ENCODE measurements at regions of chr19 and their contacts with region 1.

Region 1: GRCh38 chr19:1020868-1021425 is at the start of gene TMEM259:
- DNase-seq: peak; percentile 98 to 99 (median 98)
- H3K4me3 ChIP-seq: peak within 1 kb of the TSS; percentile 66 to 69
- H3K4me3 Mint-ChIP-seq: peak within 1 kb of the TSS; percentile 86 to 92 (median 89)
- H3K27ac ChIP-seq: peak within 1 kb of the TSS; percentile 95
- H3K27ac Mint-ChIP-seq: peak within 1 kb of the TSS; percentile 97 to 100 (median 100)
- H3K4me1 ChIP-seq: peaks cover 54% of the 10 kb centered on the region
- H3K4me1 Mint-ChIP-seq: peaks cover 19 to 62% (median 39%) of the 10 kb centered on the region in 4 donors
- H3K27me3 ChIP-seq: no peaks in the 10 kb centered on the region
- H3K27me3 Mint-ChIP-seq: peaks cover 0 to 6% of the 10 kb centered on the region in 2 donors
- total RNA-seq, gene TMEM259: 315 to 329 TPM

Region 2: GRCh38 chr19:970695-971094 is 50.3 kb before region 1 on chr19:
- CTCF ChIA-PET with region 1: no interaction called
- POLR2A ChIA-PET with region 1: no interaction called
- intact Hi-C with region 1: no loop called
- DNase-seq: no peak
- H3K4me3 ChIP-seq: no peak overlapping the region
- H3K4me3 Mint-ChIP-seq: no peak overlapping the region
- H3K27ac ChIP-seq: no peak overlapping the region
- H3K27ac Mint-ChIP-seq: peak overlapping the region in 1 of 7 donors; percentile 70
- H3K4me1 ChIP-seq: no peaks in the 10 kb centered on the region
- H3K4me1 Mint-ChIP-seq: no peaks in the 10 kb centered on the region
- H3K27me3 ChIP-seq: no peaks in the 10 kb centered on the region
- H3K27me3 Mint-ChIP-seq: no peaks in the 10 kb centered on the region

Region 3: GRCh38 chr19:1001538-1002166 is 19.3 kb before region 1 on chr19:
- CTCF ChIA-PET with region 1: interaction called, 4 read pairs
- POLR2A ChIA-PET with region 1: interaction called, 8 read pairs
- intact Hi-C with region 1: loop called (anchors 2 kb)
- DNase-seq: peak; percentile 60 to 71 (median 61)
- H3K4me3 ChIP-seq: no peak overlapping the region
- H3K4me3 Mint-ChIP-seq: no peak overlapping the region
- H3K27ac ChIP-seq: no peak overlapping the region
- H3K27ac Mint-ChIP-seq: peak overlapping the region in 1 of 7 donors; percentile 21
- H3K4me1 ChIP-seq: peaks cover 15% of the 10 kb centered on the region
- H3K4me1 Mint-ChIP-seq: peaks cover 2 to 18% (median 10%) of the 10 kb centered on the region in 4 donors
- H3K27me3 ChIP-seq: peaks cover 26% of the 10 kb centered on the region
- H3K27me3 Mint-ChIP-seq: peaks cover 17 to 19% of the 10 kb centered on the region in 2 donors

Region 4: DNA sequence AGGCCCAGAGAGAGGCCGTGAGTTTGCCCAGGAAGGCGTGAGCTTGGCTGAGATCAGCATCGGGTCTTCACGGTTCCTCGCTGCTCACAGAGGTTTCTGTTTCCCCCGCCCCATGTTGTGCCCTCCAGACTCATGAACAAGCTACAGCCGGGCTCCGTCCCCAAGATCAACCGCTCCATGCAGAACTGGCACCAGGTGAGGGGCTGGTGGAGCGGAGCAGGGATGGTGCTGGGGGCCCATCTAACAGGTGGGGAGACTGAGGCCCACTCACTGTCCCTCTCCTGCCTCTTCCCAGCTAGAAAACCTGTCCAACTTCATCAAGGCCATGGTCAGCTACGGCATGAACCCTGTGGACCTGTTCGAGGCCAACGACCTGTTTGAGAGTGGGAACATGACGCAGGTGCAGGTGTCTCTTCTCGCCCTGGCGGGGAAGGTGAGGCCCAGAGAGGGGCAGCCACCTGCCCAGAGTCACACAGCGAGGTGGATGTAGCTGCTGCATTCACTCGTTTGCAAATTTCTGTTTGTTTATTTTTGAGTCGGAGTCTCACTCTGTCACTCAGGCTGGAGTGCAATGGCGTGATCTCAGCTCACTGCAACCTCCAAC is 11.4 kb after region 1 on chr19:
- CTCF ChIA-PET with region 1: interaction called, 18 read pairs
- POLR2A ChIA-PET with region 1: interaction called, 562 read pairs
- intact Hi-C with region 1: no loop called
- DNase-seq: no peak
- H3K4me3 ChIP-seq: no peak overlapping the region
- H3K4me3 Mint-ChIP-seq: peak overlapping the region in 1 of 8 donors; percentile 15
- H3K27ac ChIP-seq: peak overlapping the region; percentile 9
- H3K27ac Mint-ChIP-seq: peak overlapping the region; percentile 36 to 89 (median 61)
- H3K4me1 ChIP-seq: peaks cover 64% of the 10 kb centered on the region
- H3K4me1 Mint-ChIP-seq: peaks cover 19 to 63% (median 38%) of the 10 kb centered on the region in 4 donors
- H3K27me3 ChIP-seq: no peaks in the 10 kb centered on the region
- H3K27me3 Mint-ChIP-seq: no peaks in the 10 kb centered on the region

Region 5: GRCh38 chr19:1360818-1361461 is 340.0 kb after region 1 on chr19:
- CTCF ChIA-PET with region 1: no interaction called
- POLR2A ChIA-PET with region 1: no interaction called
- intact Hi-C with region 1: no loop called
- DNase-seq: no peak
- H3K4me3 ChIP-seq: no peak overlapping the region
- H3K4me3 Mint-ChIP-seq: no peak overlapping the region
- H3K27ac ChIP-seq: no peak overlapping the region
- H3K27ac Mint-ChIP-seq: no peak overlapping the region
- H3K4me1 ChIP-seq: peaks cover 15% of the 10 kb centered on the region
- H3K4me1 Mint-ChIP-seq: peaks cover 9 to 38% (median 21%) of the 10 kb centered on the region in 4 donors
- H3K27me3 ChIP-seq: no peaks in the 10 kb centered on the region
- H3K27me3 Mint-ChIP-seq: no peaks in the 10 kb centered on the region